Left colon (tissue), 2 donors: ENCODE measurements at regions of chr6 and their contacts with region 1.

Region 1: GRCh38 chr6:52664186-52664990 is 6.5 kb upstream of the TMEM14A start:
- DNase-seq: peak; percentile 92 to 94
- ATAC-seq: peak; percentile 97

Region 2: DNA sequence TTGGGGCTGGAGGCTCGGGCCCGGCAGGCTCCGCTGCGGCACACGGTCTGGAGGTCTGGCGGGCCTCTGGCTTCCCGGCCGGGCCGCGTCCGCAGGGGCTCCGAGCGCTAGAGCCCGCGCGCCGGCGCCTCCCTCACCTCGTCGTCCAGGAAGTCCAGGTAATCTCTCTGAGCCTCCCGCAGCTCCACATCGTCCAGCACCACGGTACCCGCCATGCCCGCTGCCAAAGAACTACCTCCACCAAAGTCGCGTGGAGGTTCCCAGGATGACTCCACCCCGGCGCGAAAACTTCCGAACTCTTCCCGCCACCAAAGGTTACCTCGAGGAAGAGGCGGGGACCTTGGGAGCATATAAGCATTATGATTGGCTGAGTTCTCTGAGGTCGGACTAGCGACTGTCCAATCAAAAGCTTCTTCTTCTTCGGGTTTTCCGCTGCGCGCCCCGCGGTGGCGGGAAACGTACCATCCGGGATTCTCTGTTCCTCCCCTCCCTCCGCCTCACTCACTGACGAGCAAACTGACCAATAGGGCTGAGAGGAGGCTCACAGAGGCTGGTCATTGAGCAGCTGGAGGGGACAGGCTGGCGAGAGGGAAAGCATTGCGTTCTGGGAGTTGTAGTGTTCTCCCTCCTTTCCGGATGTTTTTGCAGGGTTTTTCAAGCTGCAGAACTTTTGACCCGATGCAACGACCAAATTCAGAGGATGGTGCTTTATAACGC is 379.8 kb before region 1 on chr6 and contains the start of gene MCM3:
- intact Hi-C with region 1: loop called in 1 of 2 experiments (anchors 10 kb)
- DNase-seq: peak; percentile 96 to 98
- ATAC-seq: peak; percentile 95
- total RNA-seq, gene MCM3: 22.5 to 33.2 TPM

Region 3: GRCh38 chr6:52497652-52498408 is 166.6 kb before region 1 on chr6:
- intact Hi-C with region 1: no loop called
- DNase-seq: peak in 1 of 2 donors; percentile 58
- ATAC-seq: peak; percentile 11

Region 4: GRCh38 chr6:52598123-52598823 is 66.1 kb before region 1 on chr6:
- intact Hi-C with region 1: loop called in 1 of 2 experiments (anchors 5 kb)
- DNase-seq: peak; percentile 34 to 40
- ATAC-seq: peak; percentile 54